ENCODE measurements at regions of chr11 and their contacts with region 1.

Region 1: GRCh38 chr11:17298302-17298701 is 21.8 kb downstream of the NUCB2 start:
- DNase-seq: peak; percentile 82
- H3K4me3 Mint-ChIP-seq: no peak overlapping the region
- H3K27ac Mint-ChIP-seq: peak overlapping the region; percentile 30
- H3K4me1 Mint-ChIP-seq: peaks cover 41% of the 10 kb centered on the region
- H3K27me3 Mint-ChIP-seq: no peaks in the 10 kb centered on the region

Region 2: DNA sequence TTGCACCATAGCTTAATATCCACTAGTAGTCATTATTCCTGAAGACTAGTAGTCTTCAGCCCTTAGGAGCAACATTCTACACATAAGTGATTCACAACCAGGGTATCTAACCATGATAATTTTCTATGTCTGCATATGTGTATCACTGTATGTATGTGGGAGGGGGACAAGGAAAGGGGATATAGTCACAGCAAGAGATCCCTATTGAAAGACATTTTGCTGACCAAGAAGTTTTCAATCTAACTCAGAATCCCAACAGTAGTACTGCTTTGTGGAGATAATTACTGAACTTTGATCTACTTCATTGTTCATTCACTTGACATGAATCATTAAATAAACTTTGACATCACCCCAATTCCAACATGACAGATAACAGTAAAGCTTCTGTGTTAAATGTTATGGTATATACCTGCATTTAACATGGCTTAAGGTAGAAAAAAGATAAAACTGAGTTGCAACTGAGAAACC is 100.8 kb before region 1 on chr11:
- CTCF ChIA-PET with region 1: no interaction called
- intact Hi-C with region 1: no loop called
- DNase-seq: no peak
- H3K4me3 Mint-ChIP-seq: no peak overlapping the region
- H3K27ac Mint-ChIP-seq: no peak overlapping the region
- H3K4me1 Mint-ChIP-seq: peaks cover 12% of the 10 kb centered on the region
- H3K27me3 Mint-ChIP-seq: no peaks in the 10 kb centered on the region

Region 3: GRCh38 chr11:17207317-17208258 is 90.7 kb before region 1 on chr11 and contains the start of gene PIK3C2A:
- CTCF ChIA-PET with region 1: no interaction called
- intact Hi-C with region 1: loop called (anchors 1 kb)
- DNase-seq: peak; percentile 97
- H3K4me3 Mint-ChIP-seq: peak within 1 kb of the TSS; percentile 99
- H3K27ac Mint-ChIP-seq: peak within 1 kb of the TSS; percentile 92
- H3K4me1 Mint-ChIP-seq: peaks cover 30% of the 10 kb centered on the region
- H3K27me3 Mint-ChIP-seq: no peaks in the 10 kb centered on the region
- total RNA-seq, gene PIK3C2A: 16.4 to 17.3 TPM

Region 4: GRCh38 chr11:17276236-17277023 is 21.9 kb before region 1 on chr11 and contains the start of gene NUCB2:
- CTCF ChIA-PET with region 1: no interaction called
- intact Hi-C with region 1: loop called (anchors 1 kb)
- DNase-seq: peak; percentile 98
- H3K4me3 Mint-ChIP-seq: peak within 1 kb of the TSS; percentile 75
- H3K27ac Mint-ChIP-seq: peak within 1 kb of the TSS; percentile 83
- H3K4me1 Mint-ChIP-seq: peaks cover 33% of the 10 kb centered on the region
- H3K27me3 Mint-ChIP-seq: no peaks in the 10 kb centered on the region
- total RNA-seq, gene NUCB2: 67.7 to 74.0 TPM

Region 5: GRCh38 chr11:17314232-17314547 is 15.9 kb after region 1 on chr11:
- CTCF ChIA-PET with region 1: no interaction called
- intact Hi-C with region 1: loop called (anchors 1 kb)
- DNase-seq: no peak
- H3K4me3 Mint-ChIP-seq: no peak overlapping the region
- H3K27ac Mint-ChIP-seq: no peak overlapping the region
- H3K4me1 Mint-ChIP-seq: no peaks in the 10 kb centered on the region
- H3K27me3 Mint-ChIP-seq: no peaks in the 10 kb centered on the region